Sciatic nerve (tissue), 2 donors: ENCODE measurements at regions of chr12 and their contacts with region 1.

Region 1: DNA sequence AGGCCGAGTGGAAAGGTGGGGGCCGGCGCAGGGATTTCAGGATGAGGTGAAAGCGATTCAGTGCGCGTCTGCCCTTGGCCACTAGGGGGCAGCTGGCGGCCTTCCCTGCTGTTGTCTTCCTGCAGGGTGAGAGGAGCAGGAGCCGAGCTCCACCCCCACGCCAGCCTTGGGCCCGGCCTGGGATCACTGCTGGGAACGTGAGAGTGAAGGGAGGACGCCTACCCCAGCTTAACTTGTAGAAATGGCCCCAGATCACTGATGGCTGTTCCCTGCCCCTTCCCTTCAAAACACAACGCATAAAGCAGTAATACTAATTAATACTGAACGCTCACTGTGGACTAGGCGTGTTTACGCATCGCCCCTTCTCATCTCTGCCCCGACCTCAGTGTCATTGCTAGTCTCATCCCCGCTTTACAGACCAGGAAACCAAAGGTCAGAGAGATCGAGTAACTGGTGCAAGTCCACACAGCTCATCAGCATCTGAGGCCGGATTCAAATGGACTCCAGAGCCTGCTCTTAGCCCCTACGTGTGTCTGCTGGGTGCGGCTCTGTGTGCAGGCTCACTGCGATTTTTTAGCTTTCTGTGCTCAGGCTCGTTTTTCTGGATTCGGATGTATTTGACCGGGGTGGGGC is 24.3 kb downstream of the MVK start:
- DNase-seq: peak; percentile 94
- ATAC-seq: peak; percentile 97

Region 2: GRCh38 chr12:108514973-108515814 is 1082.7 kb before region 1 on chr12 and contains the start of gene FICD:
- intact Hi-C with region 1: no loop called
- DNase-seq: peak; percentile 100
- ATAC-seq: peak; percentile 98
- total RNA-seq, gene FICD: 8.2 TPM

Region 3: DNA sequence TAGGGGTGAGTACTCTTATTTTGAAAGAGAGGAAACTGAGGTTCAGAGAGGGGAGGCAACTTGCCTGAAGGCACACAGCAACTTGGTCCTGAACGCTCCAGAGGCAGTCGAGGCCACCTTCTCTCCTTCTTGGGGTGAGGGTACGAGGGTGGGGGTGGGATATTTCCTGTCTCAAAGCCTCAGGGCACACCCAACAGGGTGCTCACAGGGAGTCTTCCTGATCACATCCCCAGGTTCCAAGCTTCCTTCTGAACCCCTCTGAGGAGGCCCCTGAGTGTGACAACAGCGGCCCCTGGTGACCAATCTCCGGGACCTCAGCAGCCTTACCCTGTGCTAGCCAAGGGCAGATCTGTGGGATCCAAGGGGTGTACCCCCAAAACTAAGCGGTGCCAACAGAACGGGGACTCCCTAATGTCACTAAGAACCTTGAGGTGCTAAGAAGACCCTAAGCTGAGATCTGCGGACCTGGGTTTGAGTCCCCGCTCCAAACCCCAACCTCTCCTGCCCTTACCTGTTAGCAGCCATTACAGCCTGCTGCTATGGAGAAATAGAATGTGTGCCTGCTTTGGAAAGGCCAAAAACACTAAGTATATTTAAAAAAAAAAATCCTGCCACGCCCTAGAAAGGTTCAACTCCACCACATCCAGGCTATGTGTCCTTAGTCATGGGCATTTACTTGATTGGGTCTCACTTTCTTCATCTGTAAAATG is 177.4 kb after region 1 on chr12:
- intact Hi-C with region 1: loop called (anchors 2 kb)
- DNase-seq: peak; percentile 89
- ATAC-seq: peak; percentile 82